GM12878 (cell line): ENCODE measurements at regions of chr18 and their contacts with region 1.

Region 1: DNA sequence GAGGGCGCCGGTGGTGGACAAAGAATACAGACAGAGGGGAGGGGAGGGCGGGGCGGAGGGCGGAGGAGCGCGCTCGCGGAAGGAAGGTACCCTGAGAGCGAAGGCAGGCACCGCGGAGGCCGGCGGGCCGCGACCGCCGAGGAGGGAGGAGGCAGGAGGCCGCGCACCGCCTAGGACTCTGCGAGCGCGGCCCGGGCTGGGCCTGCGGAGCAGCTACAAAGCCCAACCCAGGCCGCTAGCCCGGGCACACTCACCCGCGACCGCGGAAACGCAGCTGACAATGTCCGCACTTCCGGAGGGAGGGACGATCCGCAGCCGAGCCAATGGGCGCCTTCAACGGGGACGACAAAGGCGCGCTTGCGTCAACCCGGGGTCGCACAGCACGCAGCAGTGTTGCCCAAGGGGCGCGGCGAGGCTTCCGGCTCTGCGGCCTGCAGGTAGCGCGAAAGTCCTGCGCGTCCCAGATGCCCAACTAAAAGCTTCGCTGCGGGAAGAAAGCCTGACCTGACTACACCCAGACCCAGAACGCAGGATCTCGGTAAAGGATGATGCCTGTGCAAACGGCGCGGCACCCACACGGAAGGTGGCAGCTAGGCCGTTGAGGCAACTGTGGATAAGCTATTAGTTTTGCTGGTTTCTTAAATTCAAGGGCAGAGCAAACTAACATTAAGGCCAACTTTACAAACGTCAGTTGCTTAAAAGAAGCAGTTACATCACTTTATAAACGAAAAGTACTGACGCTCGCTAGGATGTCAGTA is at the start of gene C18orf32:
- DNase-seq: peak; percentile 83
- ATAC-seq: peak; percentile 95
- H3K4me3 ChIP-seq: peak within 1 kb of the TSS; percentile 96
- H3K27ac ChIP-seq: peak within 1 kb of the TSS; percentile 72
- H3K4me1 ChIP-seq: peaks cover 9% of the 10 kb centered on the region
- H3K27me3 ChIP-seq: no peaks in the 10 kb centered on the region
- CTCF ChIP-seq: no peak
- EP300 ChIP-seq: no peak
- POLR2A ChIP-seq: peak; percentile 98
- RAD21 ChIP-seq: no peak
- polyA plus RNA-seq, gene C18orf32: 35.7 to 44.0 TPM

Region 2: GRCh38 chr18:49459404-49460171 is 27.5 kb before region 1 on chr18:
- CTCF ChIA-PET with region 1: interaction called, 8 read pairs
- POLR2A ChIA-PET with region 1: interaction called, 14 read pairs
- RAD21 ChIA-PET with region 1: interaction called, 7 read pairs
- SMC1A ChIA-PET with region 1: interaction called, 19 read pairs
- in situ Hi-C with region 1: no loop called
- intact Hi-C with region 1: loop called (anchors 2 kb)
- DNase-seq: no peak
- ATAC-seq: peak; percentile 71
- H3K4me3 ChIP-seq: peak overlapping the region; percentile 84
- H3K27ac ChIP-seq: peak overlapping the region; percentile 72
- H3K4me1 ChIP-seq: peaks cover 3% of the 10 kb centered on the region; the same call in 1 of the 2 replicates
- H3K27me3 ChIP-seq: no peaks in the 10 kb centered on the region
- CTCF ChIP-seq: no peak
- EP300 ChIP-seq: no peak
- POLR2A ChIP-seq: no peak
- RAD21 ChIP-seq: no peak

Region 3: GRCh38 chr18:49464718-49465598 is 22.2 kb before region 1 on chr18:
- CTCF ChIA-PET with region 1: no interaction called
- POLR2A ChIA-PET with region 1: interaction called, 14 read pairs
- RAD21 ChIA-PET with region 1: interaction called, 7 read pairs
- SMC1A ChIA-PET with region 1: interaction called, 19 read pairs
- in situ Hi-C with region 1: no loop called
- intact Hi-C with region 1: loop called (anchors 2 kb)
- DNase-seq: no peak
- ATAC-seq: no peak
- H3K4me3 ChIP-seq: no peak overlapping the region
- H3K27ac ChIP-seq: no peak overlapping the region
- H3K4me1 ChIP-seq: peaks cover 3% of the 10 kb centered on the region; the same call in 1 of the 2 replicates
- H3K27me3 ChIP-seq: no peaks in the 10 kb centered on the region
- CTCF ChIP-seq: peak in 1 of 3 experiments; percentile 38; a peak in 2 of 6 replicates
- EP300 ChIP-seq: no peak
- POLR2A ChIP-seq: no peak
- RAD21 ChIP-seq: peak; percentile 28

Region 4: GRCh38 chr18:49628881-49629795 is 142.0 kb after region 1 on chr18:
- CTCF ChIA-PET with region 1: no interaction called
- POLR2A ChIA-PET with region 1: no interaction called
- RAD21 ChIA-PET with region 1: no interaction called
- SMC1A ChIA-PET with region 1: no interaction called
- in situ Hi-C with region 1: no loop called
- intact Hi-C with region 1: no loop called
- DNase-seq: no peak
- ATAC-seq: no peak
- H3K4me3 ChIP-seq: no peak overlapping the region
- H3K27ac ChIP-seq: no peak overlapping the region
- H3K4me1 ChIP-seq: no peaks in the 10 kb centered on the region
- H3K27me3 ChIP-seq: peaks cover 0 to 2% of the 10 kb centered on the region in 2 experiments; a peak in 2 of 4 replicates
- CTCF ChIP-seq: 0 out of 6 replicates have a peak, but pooled peaks of 1 of the 3 experiments have one; percentile 19
- EP300 ChIP-seq: no peak
- POLR2A ChIP-seq: no peak
- RAD21 ChIP-seq: no peak

Region 5: GRCh38 chr18:50281295-50281971 is 794.3 kb after region 1 on chr18 and contains the start of gene MBD1:
- CTCF ChIA-PET with region 1: no interaction called
- POLR2A ChIA-PET with region 1: no interaction called
- RAD21 ChIA-PET with region 1: no interaction called
- SMC1A ChIA-PET with region 1: no interaction called
- in situ Hi-C with region 1: no loop called
- intact Hi-C with region 1: loop called (anchors 5 kb)
- DNase-seq: peak; percentile 96
- ATAC-seq: peak; percentile 96
- H3K4me3 ChIP-seq: peak within 1 kb of the TSS; percentile 99
- H3K27ac ChIP-seq: peak within 1 kb of the TSS; percentile 88
- H3K4me1 ChIP-seq: peaks cover 16% of the 10 kb centered on the region
- H3K27me3 ChIP-seq: no peaks in the 10 kb centered on the region
- CTCF ChIP-seq: peak in 2 of 3 experiments; percentile 17 to 26; a peak in 1 of 6 replicates
- EP300 ChIP-seq: no peak
- POLR2A ChIP-seq: no peak
- RAD21 ChIP-seq: no peak
- polyA plus RNA-seq, gene MBD1: 8.4 to 12.4 TPM

Region 6: GRCh38 chr18:51029694-51030536 is 1542.8 kb after region 1 on chr18 and contains the start of gene SMAD4:
- CTCF ChIA-PET with region 1: no interaction called
- POLR2A ChIA-PET with region 1: no interaction called
- RAD21 ChIA-PET with region 1: no interaction called
- SMC1A ChIA-PET with region 1: no interaction called
- in situ Hi-C with region 1: loop called (anchors 25 kb)
- intact Hi-C with region 1: no loop called
- DNase-seq: peak; percentile 71
- ATAC-seq: peak; percentile 90
- H3K4me3 ChIP-seq: peak within 1 kb of the TSS; percentile 88
- H3K27ac ChIP-seq: peak within 1 kb of the TSS; percentile 77
- H3K4me1 ChIP-seq: peaks cover 6% of the 10 kb centered on the region
- H3K27me3 ChIP-seq: no peaks in the 10 kb centered on the region
- CTCF ChIP-seq: 0 out of 6 replicates have a peak, but pooled peaks of 1 of the 3 experiments have one; percentile 4
- EP300 ChIP-seq: no peak
- POLR2A ChIP-seq: peak; percentile 97
- RAD21 ChIP-seq: no peak
- polyA plus RNA-seq, gene SMAD4: 9.6 to 13.3 TPM